PC-3 (cell line): ENCODE measurements at regions of chr1 and their contacts with region 1.

Region 1: DNA sequence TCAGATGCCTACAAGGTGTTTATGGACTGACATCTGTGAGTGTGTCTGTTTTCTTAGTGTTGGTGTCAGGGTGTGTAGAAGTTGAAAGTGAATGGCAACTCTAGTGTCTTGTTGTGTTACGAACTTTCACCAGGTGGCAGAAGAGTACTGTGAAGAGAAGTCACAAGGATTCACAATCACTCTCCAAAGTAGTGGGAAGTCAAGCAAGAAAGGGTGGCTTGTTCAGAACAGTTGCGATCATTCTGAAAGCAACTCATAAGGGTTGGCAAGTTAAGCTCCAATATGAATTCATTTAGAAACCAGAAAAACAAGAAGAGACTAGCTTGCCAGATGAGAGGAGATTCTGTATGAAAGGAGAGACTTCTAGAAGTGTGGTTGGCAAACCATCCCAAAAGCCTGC is 86.1 kb downstream of the FASLG start:
- DNase-seq: peak; percentile 99
- ATAC-seq: peak; percentile 27
- H3K4me3 ChIP-seq: no peak overlapping the region
- H3K27ac ChIP-seq: no peak overlapping the region
- H3K4me1 ChIP-seq: peaks cover 34% of the 10 kb centered on the region
- H3K27me3 ChIP-seq: no peaks in the 10 kb centered on the region
- CTCF ChIP-seq: peak; percentile 100

Region 2: DNA sequence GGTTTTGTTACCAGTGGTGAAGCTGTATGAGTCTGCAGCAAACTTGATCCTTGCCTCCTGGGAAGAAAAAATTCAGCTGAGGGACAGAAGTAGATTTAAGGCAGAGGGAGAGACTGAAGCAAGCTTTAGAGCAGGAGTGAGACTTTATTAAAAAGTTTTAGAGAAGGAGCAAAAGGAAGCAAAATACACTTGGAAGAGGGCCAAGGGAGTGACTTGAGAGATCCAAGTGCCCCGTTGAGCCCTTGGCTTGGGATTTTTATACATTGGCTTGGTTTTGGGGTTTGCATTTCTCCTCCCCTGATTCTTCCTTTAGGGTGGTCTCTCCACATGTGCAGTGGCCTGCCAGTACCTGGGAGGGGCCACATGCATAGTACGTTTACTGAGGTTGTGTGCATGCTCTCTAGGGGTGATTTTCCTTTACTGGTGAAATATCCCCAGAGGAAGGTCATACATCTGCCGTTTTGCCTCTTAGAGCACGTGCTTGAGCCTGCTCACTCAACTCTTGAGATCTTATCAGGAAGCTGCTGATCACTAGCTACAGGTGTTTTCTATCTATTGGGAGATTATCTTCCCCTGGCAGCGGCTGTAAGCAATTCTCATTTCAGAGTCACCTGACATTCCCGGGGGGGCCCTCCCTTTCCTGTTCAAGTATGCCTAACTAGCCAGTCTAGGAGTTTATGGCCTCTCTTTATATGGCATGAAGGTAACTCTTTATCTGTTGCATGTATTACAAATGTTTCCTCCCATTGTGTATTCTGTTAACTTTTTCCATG is 65.8 kb before region 1 on chr1:
- CTCF ChIA-PET with region 1: no interaction called
- POLR2A ChIA-PET with region 1: no interaction called
- intact Hi-C with region 1: no loop called
- DNase-seq: no peak
- ATAC-seq: no peak
- H3K4me3 ChIP-seq: no peak overlapping the region
- H3K27ac ChIP-seq: no peak overlapping the region
- H3K4me1 ChIP-seq: peaks cover 10% of the 10 kb centered on the region
- H3K27me3 ChIP-seq: no peaks in the 10 kb centered on the region
- CTCF ChIP-seq: no peak

Region 3: GRCh38 chr1:172699111-172699510 is 45.9 kb before region 1 on chr1:
- CTCF ChIA-PET with region 1: no interaction called
- POLR2A ChIA-PET with region 1: no interaction called
- intact Hi-C with region 1: no loop called
- DNase-seq: peak; percentile 96
- ATAC-seq: peak; percentile 93
- H3K4me3 ChIP-seq: no peak overlapping the region
- H3K27ac ChIP-seq: peak overlapping the region; percentile 55
- H3K4me1 ChIP-seq: peaks cover 24% of the 10 kb centered on the region
- H3K27me3 ChIP-seq: no peaks in the 10 kb centered on the region
- CTCF ChIP-seq: no peak

Region 4: DNA sequence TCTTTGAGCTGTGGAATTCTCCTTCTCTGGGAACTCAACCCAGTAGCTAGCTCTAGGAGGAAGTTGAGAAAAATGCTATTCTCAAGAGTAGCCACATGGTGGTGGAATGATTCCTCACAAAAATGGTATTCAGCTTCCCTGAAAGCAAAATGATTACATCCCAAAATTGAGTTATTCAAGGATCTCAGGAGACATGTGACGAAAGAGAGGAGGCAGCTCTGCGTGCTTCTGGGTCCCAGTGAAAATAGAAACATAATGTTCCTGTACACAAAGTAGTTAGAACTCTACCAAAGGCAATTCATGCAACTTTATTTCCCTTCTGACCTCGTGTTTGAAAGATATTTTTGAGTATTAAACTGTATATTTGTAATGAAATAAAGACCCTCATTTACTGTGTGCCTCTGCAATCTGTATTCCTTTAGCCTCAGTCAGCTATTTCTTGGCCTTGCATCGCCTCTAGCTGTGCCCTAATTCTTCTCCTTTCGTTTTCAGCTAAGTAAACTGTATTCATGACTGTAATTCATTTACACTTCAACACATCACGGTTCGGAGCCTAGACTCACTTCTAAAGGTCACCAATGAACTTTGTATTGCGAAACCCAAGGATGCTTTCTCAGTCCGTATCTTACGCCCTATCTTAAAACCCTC is 81.2 kb after region 1 on chr1:
- CTCF ChIA-PET with region 1: interaction called, 27 read pairs
- POLR2A ChIA-PET with region 1: interaction called, 5 read pairs
- intact Hi-C with region 1: loop called (anchors 1 kb)
- DNase-seq: peak; percentile 99
- ATAC-seq: peak; percentile 86
- H3K4me3 ChIP-seq: no peak overlapping the region
- H3K27ac ChIP-seq: no peak overlapping the region
- H3K4me1 ChIP-seq: peaks cover 11% of the 10 kb centered on the region
- H3K27me3 ChIP-seq: no peaks in the 10 kb centered on the region
- CTCF ChIP-seq: peak; percentile 100

Region 5: DNA sequence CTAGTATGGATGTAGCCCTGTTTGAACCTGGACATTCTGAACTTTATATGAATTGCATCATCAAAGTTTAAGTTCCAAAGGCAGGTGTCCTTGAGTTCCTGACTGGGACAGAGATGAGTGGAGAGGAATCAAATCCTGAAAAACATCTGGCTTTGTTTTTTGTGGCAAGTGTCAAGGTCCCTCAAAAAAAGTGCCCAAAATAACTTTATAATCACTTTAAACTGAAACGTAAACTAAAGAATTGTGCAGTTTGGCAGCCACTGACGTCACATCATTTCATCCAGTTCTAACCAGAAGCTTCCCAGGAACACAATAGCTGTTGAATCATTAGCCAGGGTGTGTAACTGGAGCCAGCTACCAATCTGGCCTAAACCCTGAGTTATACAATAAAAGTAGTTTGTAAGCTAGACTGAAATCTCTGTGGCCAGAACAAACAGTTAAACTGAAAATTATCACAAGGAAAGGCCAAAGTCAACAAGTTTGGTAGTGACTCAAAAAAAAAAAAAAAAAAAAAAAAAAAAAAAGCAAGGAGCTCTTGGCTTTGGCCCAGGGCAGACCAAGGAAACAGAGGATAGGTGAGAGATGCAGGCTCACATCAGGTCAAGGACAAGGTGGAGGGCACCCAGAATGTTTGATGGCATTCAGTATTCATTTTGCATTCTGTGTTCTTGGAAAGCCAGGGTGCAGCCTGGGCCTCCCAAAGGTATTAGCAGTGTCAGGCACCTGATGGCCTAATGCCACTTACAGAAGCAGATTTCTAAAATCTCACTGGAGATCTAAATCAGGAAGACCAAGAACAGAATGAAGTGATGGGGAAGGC is 231.4 kb after region 1 on chr1:
- CTCF ChIA-PET with region 1: interaction called, 5 read pairs
- POLR2A ChIA-PET with region 1: interaction called, 23 read pairs
- intact Hi-C with region 1: loop called (anchors 1 kb)
- DNase-seq: peak; percentile 100
- ATAC-seq: peak; percentile 99
- H3K4me3 ChIP-seq: peak overlapping the region; percentile 1; the same call in 1 of the 2 replicates
- H3K27ac ChIP-seq: peak overlapping the region; percentile 71
- H3K4me1 ChIP-seq: peaks cover 30% of the 10 kb centered on the region
- H3K27me3 ChIP-seq: no peaks in the 10 kb centered on the region
- CTCF ChIP-seq: no peak

Region 6: GRCh38 chr1:173202430-173203145 is 457.6 kb after region 1 on chr1:
- CTCF ChIA-PET with region 1: interaction called, 46 read pairs
- POLR2A ChIA-PET with region 1: no interaction called
- intact Hi-C with region 1: loop called (anchors 1 kb)
- DNase-seq: peak; percentile 98
- ATAC-seq: peak; percentile 93
- H3K4me3 ChIP-seq: no peak overlapping the region
- H3K27ac ChIP-seq: no peak overlapping the region
- H3K4me1 ChIP-seq: 0 out of 2 replicates have a peak, but pooled peaks cover 4% of the 10 kb centered on the region
- H3K27me3 ChIP-seq: no peaks in the 10 kb centered on the region
- CTCF ChIP-seq: peak; percentile 100

Region 7: DNA sequence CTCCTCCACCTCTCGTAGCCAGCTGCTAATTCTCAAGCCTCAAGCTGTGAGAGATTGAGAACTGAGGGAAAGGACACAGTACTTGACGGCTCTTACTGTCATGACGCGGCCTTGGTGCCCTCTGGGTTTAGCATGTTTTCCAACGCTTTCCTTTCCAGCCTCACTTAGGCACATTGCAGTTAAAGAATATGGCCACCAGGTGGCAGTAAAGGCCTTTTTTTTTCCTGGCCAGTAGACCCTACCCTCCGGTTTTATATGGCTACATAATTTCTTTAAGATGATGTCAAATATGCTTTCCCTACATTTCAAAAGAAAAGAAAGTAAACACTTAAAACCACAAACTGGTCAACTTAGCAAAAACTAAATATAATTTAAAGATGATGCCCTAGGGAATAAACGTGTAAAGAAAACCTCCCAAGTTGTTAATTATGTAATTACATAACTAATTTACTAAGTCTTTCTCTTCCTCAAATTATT is 675.4 kb after region 1 on chr1:
- CTCF ChIA-PET with region 1: interaction called, 4 read pairs
- POLR2A ChIA-PET with region 1: no interaction called
- intact Hi-C with region 1: loop called (anchors 1 kb)
- DNase-seq: peak; percentile 100
- ATAC-seq: peak; percentile 50
- H3K4me3 ChIP-seq: peak overlapping the region; percentile 35
- H3K27ac ChIP-seq: 0 out of 2 replicates have a peak overlapping the region, but pooled peaks have one; percentile 1
- H3K4me1 ChIP-seq: peaks cover 42% of the 10 kb centered on the region
- H3K27me3 ChIP-seq: no peaks in the 10 kb centered on the region
- CTCF ChIP-seq: peak; percentile 100

Region 8: DNA sequence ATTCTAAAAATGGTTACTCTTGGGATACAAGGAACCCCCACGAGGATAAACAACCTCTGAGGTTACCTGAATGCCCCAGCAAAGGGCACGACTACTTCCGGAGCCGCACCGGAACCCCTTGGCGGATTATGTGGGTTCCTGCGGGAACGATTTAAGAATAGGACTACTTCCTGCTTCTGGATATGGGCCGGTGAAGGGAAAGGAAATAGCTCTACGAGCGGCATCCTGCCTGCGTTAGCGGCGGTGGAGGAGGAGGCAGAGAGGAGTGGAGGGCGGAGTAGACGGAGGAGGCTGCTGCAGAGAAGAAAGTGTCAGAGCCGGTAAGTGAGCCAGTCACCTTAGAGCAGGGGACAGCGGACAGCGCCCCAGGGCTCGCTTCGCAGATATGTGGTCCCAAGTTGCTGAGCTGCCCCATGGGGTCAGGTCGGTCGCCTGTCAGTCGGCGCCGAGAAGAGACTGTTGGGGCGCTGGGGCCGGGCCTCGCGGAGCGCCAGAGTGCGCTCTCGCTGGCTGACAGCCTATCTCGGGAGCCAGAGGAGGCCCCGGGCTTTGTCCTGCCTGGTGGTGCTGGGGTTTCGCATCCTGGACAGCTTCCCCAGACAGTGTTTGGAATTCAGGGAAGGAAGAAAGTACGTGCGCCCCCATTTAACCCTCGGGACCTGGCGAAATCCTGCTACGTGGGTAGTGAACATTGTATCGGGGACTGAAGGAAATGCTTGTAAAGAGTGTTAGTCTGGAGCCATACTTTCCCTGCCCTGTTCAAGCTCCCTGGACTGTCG is 969.9 kb after region 1 on chr1 and contains the start of gene KLHL20:
- CTCF ChIA-PET with region 1: interaction called, 3 read pairs
- POLR2A ChIA-PET with region 1: no interaction called
- intact Hi-C with region 1: loop called (anchors 10 kb)
- DNase-seq: peak; percentile 100
- ATAC-seq: peak; percentile 97
- H3K4me3 ChIP-seq: peak within 1 kb of the TSS; percentile 72
- H3K27ac ChIP-seq: peak within 1 kb of the TSS; percentile 33
- H3K4me1 ChIP-seq: peaks cover 20% of the 10 kb centered on the region
- H3K27me3 ChIP-seq: no peaks in the 10 kb centered on the region
- CTCF ChIP-seq: peak; percentile 49
- total RNA-seq, gene KLHL20: 46.2 and 46.4 TPM in 2 replicates